Dorsolateral prefrontal cortex (tissue), 120 donors: ENCODE measurements at regions of chr15 and their contacts with region 1.

Region 1: DNA sequence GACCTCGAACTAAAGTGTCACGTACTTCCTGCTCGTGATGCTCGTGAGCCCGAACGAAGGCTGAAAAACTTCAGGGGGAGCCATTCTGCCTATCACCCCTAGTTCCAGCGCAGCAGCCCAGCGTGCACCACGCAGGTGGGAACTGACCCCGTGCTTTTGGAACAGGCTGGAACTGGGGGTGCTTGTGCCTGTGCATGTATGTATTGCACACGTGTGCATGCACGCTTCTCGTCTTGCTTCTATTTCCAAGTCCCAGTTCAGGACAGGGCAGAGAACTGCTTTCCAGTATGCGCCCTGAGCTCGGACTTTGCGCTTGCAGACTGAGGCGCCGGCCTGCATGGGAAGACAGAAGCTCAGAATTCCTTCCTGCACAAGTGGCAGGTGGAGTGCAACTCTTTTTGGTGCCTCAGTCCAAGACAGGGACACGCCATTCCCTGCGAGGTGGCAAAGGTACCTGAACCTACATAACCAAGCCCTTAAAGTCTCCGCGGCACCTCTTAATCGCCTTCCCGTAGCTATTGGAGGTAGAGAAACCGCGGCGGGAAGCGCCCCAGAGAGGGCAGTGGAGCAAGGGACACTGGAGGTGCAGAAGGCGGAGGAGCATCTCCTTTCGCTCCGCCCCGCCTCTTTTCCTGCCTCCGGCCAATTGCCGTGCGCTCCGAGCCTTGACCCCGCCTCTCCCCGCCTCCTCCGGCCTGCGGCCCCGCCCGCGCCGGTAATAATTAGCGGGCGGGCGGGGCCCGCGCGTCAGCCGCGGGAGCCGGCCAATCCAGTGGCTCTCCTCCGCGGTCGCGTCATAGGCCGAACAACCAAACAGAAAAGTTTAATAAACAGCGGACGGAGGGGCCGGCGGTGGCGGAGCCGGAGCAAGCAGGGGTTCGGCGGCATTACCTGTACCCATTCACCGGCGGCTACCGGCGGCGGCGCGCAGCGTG is at the start of gene ZFAND6:
- DNase-seq: peak; percentile 89 to 98 (median 95)
- H3K4me3 ChIP-seq: peak within 1 kb of the TSS; percentile 66 to 96 (median 84)
- H3K27ac ChIP-seq: peak within 1 kb of the TSS in 58 of 59 donors; percentile 47 to 98 (median 90)
- H3K27me3 ChIP-seq: no peaks in the 10 kb centered on the region
- CTCF ChIP-seq: peak in 26 of 56 donors; percentile 2 to 50 (median 18)
- total RNA-seq, gene ZFAND6: 31.3 to 64.3 (median 45.0) TPM

Region 2: GRCh38 chr15:80041494-80042253 is 17.4 kb before region 1 on chr15:
- intact Hi-C with region 1: no loop called
- DNase-seq: no peak
- H3K4me3 ChIP-seq: no peak overlapping the region
- H3K27ac ChIP-seq: no peak overlapping the region
- H3K27me3 ChIP-seq: no peaks in the 10 kb centered on the region
- CTCF ChIP-seq: no peak

Region 3: DNA sequence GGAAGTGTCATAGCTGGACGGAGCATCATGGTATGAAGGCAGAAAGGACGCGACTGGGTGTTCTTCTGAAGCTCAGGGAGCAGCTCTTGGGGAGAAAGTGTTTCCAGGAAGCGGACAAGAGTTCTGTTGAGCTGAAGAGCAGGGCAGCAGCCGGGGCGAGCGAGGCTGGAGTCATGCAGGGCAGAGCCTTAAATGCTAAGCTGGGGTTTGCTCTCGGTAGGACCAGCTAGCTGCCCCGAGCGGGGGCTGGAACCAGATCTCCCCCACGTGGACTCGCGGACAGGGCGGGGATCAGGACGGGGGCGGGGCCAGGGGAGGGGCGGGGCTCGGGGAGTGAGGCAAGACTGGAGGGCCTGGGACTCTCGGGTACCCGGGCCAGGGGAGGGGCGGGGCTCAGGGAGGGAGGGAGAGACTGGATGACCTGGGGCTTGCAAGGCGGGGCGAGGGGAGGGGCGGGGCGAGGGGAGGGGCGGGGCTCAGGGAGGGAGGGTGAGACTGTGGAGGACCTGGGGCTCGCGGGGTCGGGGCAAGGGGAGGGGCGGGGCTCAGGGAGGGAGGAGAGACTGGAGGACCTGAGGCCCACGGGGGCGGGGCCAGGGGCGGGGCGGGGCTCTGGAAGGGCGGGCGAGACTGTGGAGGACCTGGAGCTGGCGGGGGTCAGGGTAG is 93.2 kb after region 1 on chr15:
- intact Hi-C with region 1: loop called (anchors 5 kb)
- DNase-seq: peak; percentile 47 to 85 (median 74)
- H3K4me3 ChIP-seq: peak overlapping the region; percentile 43 to 83 (median 68)
- H3K27ac ChIP-seq: peak overlapping the region in 28 of 59 donors; percentile 8 to 76 (median 56)
- H3K27me3 ChIP-seq: no peaks in the 10 kb centered on the region
- CTCF ChIP-seq: no peak

Region 4: DNA sequence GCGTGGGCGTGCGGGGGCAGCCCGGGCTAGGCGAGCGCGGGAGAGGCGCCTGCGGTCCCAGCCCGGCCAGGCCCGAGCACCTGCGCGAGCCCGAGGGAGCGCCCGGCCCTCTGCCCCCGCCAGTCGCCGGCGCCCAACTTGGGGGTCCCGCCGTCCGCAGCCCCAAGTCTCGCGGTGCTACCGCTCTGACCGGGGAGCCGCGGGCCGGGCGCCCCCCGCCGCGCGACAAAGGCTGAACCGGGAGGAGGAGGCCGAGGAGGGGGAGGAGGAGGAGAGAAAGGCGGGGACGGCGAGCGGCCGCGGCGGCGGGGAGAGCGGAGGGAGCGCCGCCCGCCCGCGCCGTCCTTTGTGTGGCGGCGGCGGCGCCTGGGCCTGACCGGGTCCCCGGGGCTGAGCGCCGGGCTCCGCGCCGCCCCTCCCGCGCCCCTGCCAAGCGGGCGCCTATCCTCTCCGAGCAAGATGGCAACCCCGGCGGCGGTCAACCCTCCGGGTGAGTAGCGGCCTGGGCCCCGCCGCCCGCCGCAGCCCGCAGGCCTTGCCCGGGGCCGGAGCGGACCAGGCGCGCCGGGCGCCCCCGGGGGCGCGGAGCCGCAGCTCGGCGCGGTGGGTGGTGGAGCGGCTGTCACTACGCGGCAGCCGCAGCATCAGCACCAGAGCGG is 345.1 kb after region 1 on chr15 and contains the start of gene ARNT2:
- intact Hi-C with region 1: loop called in 1 of 2 experiments (anchors 10 kb)
- DNase-seq: peak in 8 of 10 donors; percentile 37 to 81 (median 60)
- H3K4me3 ChIP-seq: peak within 1 kb of the TSS; percentile 29 to 87 (median 74)
- H3K27ac ChIP-seq: peak within 1 kb of the TSS; percentile 77 to 98 (median 94)
- H3K27me3 ChIP-seq: no peaks in the 10 kb centered on the region
- CTCF ChIP-seq: peak in 2 of 56 donors; percentile 4 to 34
- total RNA-seq, gene ARNT2: 153 to 379 (median 242) TPM